ENCODE measurements at regions of chr3 and their contacts with region 1.

Region 1: GRCh38 chr3:49454458-49454857 is 15.6 kb upstream of the DAG1 start:
- DNase-seq: no peak
- ATAC-seq: no peak
- H3K4me3 ChIP-seq: no peak overlapping the region
- H3K4me3 Mint-ChIP-seq: no peak overlapping the region
- H3K27ac ChIP-seq: no peak overlapping the region
- H3K27ac Mint-ChIP-seq: peak overlapping the region; percentile 22
- H3K4me1 ChIP-seq: no peaks in the 10 kb centered on the region
- H3K4me1 Mint-ChIP-seq: no peaks in the 10 kb centered on the region
- H3K27me3 ChIP-seq: no peaks in the 10 kb centered on the region
- H3K27me3 Mint-ChIP-seq: no peaks in the 10 kb centered on the region
- CTCF ChIP-seq: no peak

Region 2: GRCh38 chr3:49171119-49171774 is 283.2 kb before region 1 on chr3 and contains the start of gene KLHDC8B:
- CTCF ChIA-PET with region 1: interaction called, 36 read pairs
- POLR2A ChIA-PET with region 1: interaction called, 3 read pairs
- intact Hi-C with region 1: no loop called
- DNase-seq: peak; percentile 81
- ATAC-seq: peak; percentile 79
- H3K4me3 ChIP-seq: peak within 1 kb of the TSS; percentile 59 to 76 (median 71)
- H3K4me3 Mint-ChIP-seq: peak within 1 kb of the TSS; percentile 90
- H3K27ac ChIP-seq: peak within 1 kb of the TSS in 1 of 2 donors; percentile 29
- H3K27ac Mint-ChIP-seq: peak within 1 kb of the TSS; percentile 70
- H3K4me1 ChIP-seq: peaks cover 19 to 25% of the 10 kb centered on the region in 2 donors
- H3K4me1 Mint-ChIP-seq: peaks cover 15% of the 10 kb centered on the region
- H3K27me3 ChIP-seq: peaks cover 0 to 7% (median 1%) of the 10 kb centered on the region in 4 experiments
- H3K27me3 Mint-ChIP-seq: peaks cover 7% of the 10 kb centered on the region
- CTCF ChIP-seq: peak; percentile 95
- total RNA-seq, gene KLHDC8B: 1.9 and 3.6 TPM in 2 replicates

Region 3: DNA sequence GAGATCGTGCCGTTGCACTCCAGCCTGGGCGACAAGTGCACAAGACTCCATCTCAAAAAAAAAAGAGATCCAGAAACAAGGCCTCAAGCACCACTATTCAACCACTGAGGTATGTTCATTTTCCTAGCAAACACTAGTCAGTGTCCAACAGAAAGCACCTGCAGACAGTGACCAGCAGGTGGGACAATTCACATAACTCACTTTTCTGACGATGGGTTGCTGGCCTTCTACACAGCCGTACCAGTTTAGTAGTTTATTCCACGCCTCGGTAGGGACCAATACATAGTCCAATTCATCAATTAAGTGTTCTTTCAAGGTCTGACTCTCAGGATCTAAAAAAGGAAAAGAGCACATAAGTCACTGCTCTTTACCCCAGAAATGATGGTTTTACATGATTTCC is 127.0 kb before region 1 on chr3:
- CTCF ChIA-PET with region 1: interaction called, 14 read pairs
- POLR2A ChIA-PET with region 1: no interaction called
- intact Hi-C with region 1: loop called (anchors 1 kb)
- DNase-seq: no peak
- ATAC-seq: no peak
- H3K4me3 ChIP-seq: no peak overlapping the region
- H3K4me3 Mint-ChIP-seq: no peak overlapping the region
- H3K27ac ChIP-seq: no peak overlapping the region
- H3K27ac Mint-ChIP-seq: no peak overlapping the region
- H3K4me1 ChIP-seq: no peaks in the 10 kb centered on the region
- H3K4me1 Mint-ChIP-seq: no peaks in the 10 kb centered on the region
- H3K27me3 ChIP-seq: no peaks in the 10 kb centered on the region
- H3K27me3 Mint-ChIP-seq: no peaks in the 10 kb centered on the region
- CTCF ChIP-seq: peak; percentile 42

Region 4: DNA sequence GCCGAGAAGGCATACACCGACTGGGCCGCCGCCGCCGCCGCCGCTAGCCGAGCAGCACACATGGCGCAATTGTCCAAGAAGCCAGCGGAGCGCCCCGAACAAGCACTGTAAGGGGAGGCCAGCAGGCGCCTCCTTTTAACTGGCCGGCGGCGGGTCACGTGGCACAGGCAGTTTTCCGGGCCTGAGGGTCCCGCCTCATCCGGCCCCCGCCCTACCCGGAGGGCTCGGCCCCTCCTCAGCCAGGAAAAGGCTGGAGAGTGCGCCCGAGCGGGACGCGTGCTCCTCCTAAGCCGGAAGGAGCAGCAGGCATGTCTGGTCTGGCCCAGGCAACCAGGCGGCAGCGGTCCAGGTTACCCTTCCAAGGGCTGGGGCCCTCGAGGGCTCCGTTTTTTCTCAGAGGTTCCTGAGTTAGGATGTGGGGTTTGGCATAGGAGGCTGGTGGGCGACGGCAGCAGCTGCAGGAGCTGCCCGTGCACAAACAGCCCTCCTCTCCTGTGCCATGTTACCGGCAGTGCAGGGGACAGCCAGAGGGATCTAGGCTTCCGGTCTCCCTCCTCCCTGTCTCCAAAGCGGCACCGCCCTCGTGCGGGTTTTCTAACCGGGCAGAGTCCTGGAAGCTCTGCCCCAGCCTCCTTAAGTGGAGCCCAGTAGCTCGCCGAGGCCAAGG is 96.1 kb before region 1 on chr3 and contains the start of gene GPX1:
- CTCF ChIA-PET with region 1: interaction called, 10 read pairs
- POLR2A ChIA-PET with region 1: no interaction called
- intact Hi-C with region 1: no loop called
- DNase-seq: peak; percentile 83
- ATAC-seq: peak; percentile 80
- H3K4me3 ChIP-seq: peak within 1 kb of the TSS; percentile 59 to 83 (median 77)
- H3K4me3 Mint-ChIP-seq: peak within 1 kb of the TSS; percentile 93
- H3K27ac ChIP-seq: peak within 1 kb of the TSS; percentile 59 to 85
- H3K27ac Mint-ChIP-seq: peak within 1 kb of the TSS; percentile 97
- H3K4me1 ChIP-seq: peaks cover 14 to 38% of the 10 kb centered on the region in 2 donors
- H3K4me1 Mint-ChIP-seq: peaks cover 28% of the 10 kb centered on the region
- H3K27me3 ChIP-seq: no peaks in the 10 kb centered on the region
- H3K27me3 Mint-ChIP-seq: no peaks in the 10 kb centered on the region
- CTCF ChIP-seq: no peak
- total RNA-seq, gene GPX1: 64.7 and 79.5 TPM in 2 replicates

Region 5: DNA sequence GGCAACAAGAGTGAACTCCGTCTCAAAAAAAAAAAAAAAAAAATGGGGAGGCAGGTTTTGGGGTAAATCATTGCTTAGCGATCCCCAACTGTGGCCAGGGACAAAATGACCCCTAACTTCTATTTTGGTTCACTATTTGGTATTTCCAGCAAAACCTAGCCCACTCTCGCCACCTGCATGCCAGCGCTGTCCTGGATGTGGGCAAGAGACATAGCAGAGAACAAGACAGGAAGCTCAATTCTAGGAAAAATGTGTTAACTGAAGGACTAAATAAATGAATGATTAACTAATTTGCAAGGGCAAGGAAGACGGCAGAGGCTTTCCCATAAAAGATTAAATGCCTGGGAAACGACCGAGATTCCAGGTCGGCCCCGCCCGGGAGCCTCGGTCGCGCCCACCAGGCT is 25.8 kb before region 1 on chr3:
- CTCF ChIA-PET with region 1: interaction called, 18 read pairs
- POLR2A ChIA-PET with region 1: interaction called, 3 read pairs
- intact Hi-C with region 1: loop called (anchors 1 kb)
- DNase-seq: no peak
- ATAC-seq: no peak
- H3K4me3 ChIP-seq: peak overlapping the region; percentile 47 to 77 (median 72)
- H3K4me3 Mint-ChIP-seq: peak overlapping the region; percentile 91
- H3K27ac ChIP-seq: peak overlapping the region; percentile 77 to 89
- H3K27ac Mint-ChIP-seq: peak overlapping the region; percentile 94
- H3K4me1 ChIP-seq: peaks cover 7 to 11% of the 10 kb centered on the region in 2 donors
- H3K4me1 Mint-ChIP-seq: peaks cover 11% of the 10 kb centered on the region
- H3K27me3 ChIP-seq: no peaks in the 10 kb centered on the region
- H3K27me3 Mint-ChIP-seq: no peaks in the 10 kb centered on the region
- CTCF ChIP-seq: no peak

Measured in B cell (primary cell).